Left cardiac atrium (tissue), 4 donors: ENCODE measurements at regions of chr12 and their contacts with region 1.

Region 1: DNA sequence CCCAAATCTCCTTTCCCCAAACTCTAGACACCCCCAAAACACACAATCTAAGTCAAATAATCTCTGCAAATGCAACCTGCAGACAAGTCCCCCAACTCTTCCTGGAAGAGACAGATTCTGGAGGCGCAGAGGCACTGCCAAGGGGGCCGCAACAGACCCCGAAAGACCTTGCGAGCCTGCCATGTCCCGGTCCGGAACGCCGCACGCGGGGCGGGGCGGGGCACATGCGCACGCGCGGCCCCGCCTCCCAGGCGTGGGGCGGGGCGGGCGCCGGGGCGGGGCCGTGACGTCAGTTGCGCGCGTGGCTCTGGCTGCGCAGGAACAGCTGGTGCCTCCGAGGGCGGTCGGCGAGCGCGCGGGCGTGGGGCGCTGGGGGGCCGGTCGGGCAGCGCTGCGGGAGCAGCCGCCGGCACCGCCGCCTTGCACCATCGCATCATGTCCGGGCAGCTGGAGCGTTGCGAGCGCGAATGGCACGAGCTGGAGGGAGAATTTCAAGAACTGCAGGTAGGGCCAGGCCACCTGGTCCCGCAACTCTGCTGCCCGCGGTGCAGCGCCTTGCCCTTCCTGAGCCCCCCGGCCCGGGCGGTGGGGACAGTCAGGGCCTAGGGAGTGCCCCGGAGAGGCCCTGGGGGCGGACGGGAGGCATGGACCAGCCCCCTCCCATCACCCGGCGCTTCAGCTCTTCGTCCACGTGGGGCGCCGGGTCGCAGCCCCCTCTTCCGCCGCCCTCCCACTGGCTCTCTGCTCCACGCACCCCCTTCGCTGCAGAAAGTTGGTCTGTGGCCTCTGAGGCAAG is at the start of gene TMEM120B:
- DNase-seq: peak; percentile 89
- ATAC-seq: peak; percentile 96 to 98
- total RNA-seq, gene TMEM120B: 8.5 to 10.2 TPM

Region 2: DNA sequence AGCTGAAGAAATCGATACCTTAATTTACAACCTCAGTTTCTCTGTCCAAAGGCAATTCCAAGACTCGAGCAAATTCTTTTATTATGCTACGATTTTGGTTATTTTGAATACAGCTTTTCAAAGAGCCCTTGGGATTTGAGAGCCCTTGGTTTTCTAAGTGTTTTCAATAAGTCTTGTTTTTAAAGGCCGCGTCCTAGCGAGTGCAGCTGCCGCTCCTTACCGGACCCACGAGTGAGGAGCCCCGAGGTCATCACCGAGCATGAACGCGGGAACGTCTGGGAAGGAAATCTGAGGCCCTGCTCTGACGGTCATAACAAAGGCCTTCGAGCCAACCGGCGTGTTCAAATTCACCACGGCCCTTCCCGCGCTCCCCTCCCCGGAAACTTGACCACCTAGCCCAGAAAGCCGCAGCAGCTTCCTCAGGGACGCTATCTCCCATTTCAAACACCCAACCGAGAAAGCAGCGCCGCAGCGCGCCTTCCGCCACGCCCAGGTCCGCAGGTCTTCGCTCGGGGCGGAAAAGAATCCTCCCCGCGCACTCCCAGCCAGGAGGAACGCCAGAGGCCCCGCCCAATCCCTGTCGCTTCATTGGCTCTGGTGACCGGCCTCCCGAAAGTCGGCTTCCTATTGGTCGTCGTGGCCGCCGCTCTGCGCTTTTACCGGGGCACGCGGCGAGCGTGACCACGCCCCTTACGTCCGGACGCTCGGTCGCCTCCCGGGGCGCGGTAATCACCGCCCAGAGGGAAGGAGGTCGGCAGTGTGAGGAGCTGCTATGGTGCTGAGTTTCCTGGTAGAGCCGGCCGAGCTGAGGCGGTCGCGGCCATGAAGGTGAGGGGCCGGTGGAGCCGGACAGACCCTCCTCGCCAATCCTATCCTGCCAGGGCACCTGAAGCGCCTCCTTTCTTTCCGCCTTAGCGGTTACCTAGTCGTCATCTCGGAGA is 313.0 kb before region 1 on chr12 and contains the start of gene RNF34:
- intact Hi-C with region 1: no loop called
- DNase-seq: peak; percentile 99
- ATAC-seq: peak; percentile 98 to 99
- total RNA-seq, gene RNF34: 21.4 to 23.5 TPM

Region 3: GRCh38 chr12:121765573-121765972 is 52.9 kb after region 1 on chr12:
- intact Hi-C with region 1: loop called in 1 of 2 experiments (anchors 5 kb)
- DNase-seq: no peak
- ATAC-seq: peak in 1 of 2 donors; percentile 41

Region 4: DNA sequence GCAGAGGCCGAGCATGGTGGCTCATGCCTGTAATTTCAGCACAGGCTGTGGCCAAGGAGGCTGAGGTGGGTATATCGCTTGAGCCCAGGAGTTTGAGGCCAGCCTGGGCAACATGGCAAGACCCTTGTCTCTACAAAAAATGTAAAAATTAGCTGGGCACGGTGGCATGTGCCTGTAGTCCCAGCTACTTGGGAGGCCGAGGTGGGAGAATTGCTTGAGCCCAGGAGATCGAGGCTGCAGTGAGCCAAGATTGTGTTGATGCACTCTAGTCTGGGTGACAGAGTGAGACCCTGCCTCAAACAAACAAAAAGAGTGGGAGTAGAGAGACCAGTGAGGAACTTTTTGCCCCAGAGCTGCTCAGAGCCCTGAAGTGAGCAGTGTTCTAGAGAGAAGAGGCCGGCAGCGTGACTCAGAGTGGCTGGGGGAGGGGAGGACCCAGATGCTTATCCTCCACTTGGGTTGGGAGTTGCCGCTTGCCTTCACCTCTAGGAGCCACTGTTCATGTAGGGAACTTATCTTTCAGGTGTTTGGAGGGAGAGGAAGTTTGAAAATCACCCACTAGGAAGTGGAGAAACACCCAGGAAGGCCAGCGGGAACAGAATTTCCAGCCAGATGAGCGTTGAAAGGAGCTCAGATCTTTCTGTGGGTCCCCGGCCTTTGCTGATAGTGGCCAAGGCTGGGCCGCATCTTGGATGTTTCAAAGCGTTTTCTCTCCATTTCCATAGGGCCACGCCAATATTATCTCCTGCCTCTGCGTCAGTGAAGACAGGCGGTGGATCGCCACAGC is 221.1 kb after region 1 on chr12:
- intact Hi-C with region 1: no loop called
- DNase-seq: no peak
- ATAC-seq: peak in 1 of 2 donors; percentile 78